ENCODE measurements at regions of chr14 and their contacts with region 1.

Region 1: DNA sequence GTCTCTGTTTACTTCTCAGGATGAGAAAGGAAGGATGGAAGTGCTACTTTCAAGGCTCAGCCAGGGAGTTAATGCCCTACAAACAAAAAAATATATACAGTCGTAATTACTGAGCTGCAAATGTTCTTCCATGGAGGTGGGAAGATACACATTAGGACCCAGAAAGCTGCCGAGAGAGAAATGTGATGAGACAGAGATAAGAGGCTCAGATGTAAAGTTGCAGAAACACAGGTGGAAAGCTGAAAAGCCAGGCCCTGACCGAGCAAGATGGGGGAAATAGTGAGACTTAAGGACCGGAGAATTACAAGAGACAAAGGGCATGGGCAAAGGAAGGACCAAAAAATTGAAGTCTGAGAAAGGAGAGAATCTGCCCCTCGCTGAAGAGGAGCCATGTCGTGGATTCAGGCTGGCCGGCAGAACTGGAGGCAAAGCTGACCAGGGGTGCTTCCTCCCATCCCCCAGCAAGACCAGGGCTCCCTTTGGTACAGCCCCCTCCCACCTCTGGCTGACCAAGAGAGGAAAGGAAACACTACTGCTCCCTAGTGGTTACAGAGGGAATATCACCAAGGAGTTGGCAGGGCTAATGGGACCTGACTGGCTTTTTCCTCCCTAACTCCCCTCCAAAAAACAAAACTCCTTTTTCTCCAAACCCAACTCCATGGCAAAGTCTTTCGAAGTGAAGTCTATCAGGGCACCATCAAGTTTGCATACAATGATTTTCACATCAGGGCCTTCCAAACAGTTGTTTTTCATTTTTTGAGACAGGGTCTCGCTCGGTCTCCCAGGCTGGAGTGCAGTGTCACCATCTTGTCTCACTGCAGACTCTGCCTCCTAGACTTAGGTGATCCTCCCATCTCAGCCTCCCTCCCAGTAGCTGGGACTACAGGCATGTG is 12.1 kb downstream of the ZFHX2 start:
- DNase-seq: peak; percentile 77
- ATAC-seq: peak; percentile 22
- H3K4me3 Mint-ChIP-seq: peak overlapping the region; percentile 83
- H3K27ac Mint-ChIP-seq: peak overlapping the region; percentile 100
- H3K4me1 Mint-ChIP-seq: peaks cover 57% of the 10 kb centered on the region
- H3K27me3 Mint-ChIP-seq: no peaks in the 10 kb centered on the region
- CTCF ChIP-seq: peak; percentile 83

Region 2: GRCh38 chr14:23494223-23494622 is 45.3 kb before region 1 on chr14:
- CTCF ChIA-PET with region 1: interaction called, 14 read pairs
- POLR2A ChIA-PET with region 1: interaction called, 14 read pairs
- DNase-seq: peak; percentile 44
- ATAC-seq: peak; percentile 99
- H3K4me3 Mint-ChIP-seq: peak overlapping the region; percentile 37; the same call in 1 of the 2 replicates
- H3K27ac Mint-ChIP-seq: peak overlapping the region; percentile 95
- H3K4me1 Mint-ChIP-seq: peaks cover 30% of the 10 kb centered on the region
- H3K27me3 Mint-ChIP-seq: no peaks in the 10 kb centered on the region
- CTCF ChIP-seq: no peak

Region 3: DNA sequence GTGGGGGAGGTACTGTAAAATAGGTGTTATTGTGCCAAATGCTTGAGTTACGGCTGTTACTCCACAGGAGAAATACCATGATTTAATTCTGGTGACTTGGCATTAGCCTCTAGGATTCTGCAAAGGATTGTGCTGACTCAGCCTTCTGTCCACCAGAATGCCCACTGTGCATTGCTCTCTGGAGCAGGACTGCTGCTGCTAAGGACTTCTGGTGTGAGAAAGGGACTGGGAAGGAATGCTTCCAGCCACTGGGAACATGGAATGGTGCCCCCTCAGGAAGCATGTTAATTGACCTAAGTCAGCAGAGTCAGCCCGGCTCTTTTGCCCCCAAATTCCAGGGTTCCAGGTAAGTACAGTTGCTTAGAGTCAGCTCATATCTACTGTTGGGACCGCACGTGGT is 20.8 kb before region 1 on chr14:
- CTCF ChIA-PET with region 1: interaction called, 47 read pairs
- POLR2A ChIA-PET with region 1: interaction called, 49 read pairs
- DNase-seq: no peak
- ATAC-seq: peak; percentile 66
- H3K4me3 Mint-ChIP-seq: no peak overlapping the region
- H3K27ac Mint-ChIP-seq: no peak overlapping the region
- H3K4me1 Mint-ChIP-seq: peaks cover 55% of the 10 kb centered on the region
- H3K27me3 Mint-ChIP-seq: peaks cover 38% of the 10 kb centered on the region
- CTCF ChIP-seq: no peak

Region 4: GRCh38 chr14:23613242-23614070 is 74.0 kb after region 1 on chr14:
- CTCF ChIA-PET with region 1: no interaction called
- POLR2A ChIA-PET with region 1: no interaction called
- DNase-seq: no peak
- ATAC-seq: no peak
- H3K4me3 Mint-ChIP-seq: no peak overlapping the region
- H3K27ac Mint-ChIP-seq: no peak overlapping the region
- H3K4me1 Mint-ChIP-seq: peaks cover 8% of the 10 kb centered on the region; the same call in 1 of the 2 replicates
- H3K27me3 Mint-ChIP-seq: peaks cover 17% of the 10 kb centered on the region
- CTCF ChIP-seq: no peak

Region 5: DNA sequence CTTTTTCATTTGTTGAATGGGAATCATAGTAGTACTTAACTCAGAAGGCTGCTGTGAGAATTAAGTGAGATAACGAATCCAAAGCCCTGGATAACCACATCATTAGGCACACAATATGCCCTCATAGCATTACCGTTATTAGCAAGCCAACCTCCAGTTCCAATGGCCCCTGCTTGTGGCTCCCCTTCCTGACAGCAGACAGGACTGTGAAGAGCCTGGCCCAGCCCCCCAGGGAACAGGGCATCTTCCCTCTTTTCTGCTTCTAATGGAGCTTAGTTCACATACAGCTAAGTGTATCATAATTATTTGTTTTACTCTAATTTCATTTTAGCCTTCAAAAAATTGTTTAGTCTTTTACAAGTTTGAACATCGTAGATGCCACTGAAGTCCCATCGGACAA is 136.4 kb after region 1 on chr14:
- CTCF ChIA-PET with region 1: no interaction called
- POLR2A ChIA-PET with region 1: no interaction called
- DNase-seq: no peak
- ATAC-seq: no peak
- H3K4me3 Mint-ChIP-seq: no peak overlapping the region
- H3K27ac Mint-ChIP-seq: no peak overlapping the region
- H3K4me1 Mint-ChIP-seq: peaks cover under 1% of the 10 kb centered on the region; the same call in 1 of the 2 replicates
- H3K27me3 Mint-ChIP-seq: peaks cover 7% of the 10 kb centered on the region; the same call in 1 of the 2 replicates
- CTCF ChIP-seq: no peak

Measured in WTC11 (cell line).